GM10248 (cell line): ENCODE measurements at regions of chr5 and their contacts with region 1.

Region 1: DNA sequence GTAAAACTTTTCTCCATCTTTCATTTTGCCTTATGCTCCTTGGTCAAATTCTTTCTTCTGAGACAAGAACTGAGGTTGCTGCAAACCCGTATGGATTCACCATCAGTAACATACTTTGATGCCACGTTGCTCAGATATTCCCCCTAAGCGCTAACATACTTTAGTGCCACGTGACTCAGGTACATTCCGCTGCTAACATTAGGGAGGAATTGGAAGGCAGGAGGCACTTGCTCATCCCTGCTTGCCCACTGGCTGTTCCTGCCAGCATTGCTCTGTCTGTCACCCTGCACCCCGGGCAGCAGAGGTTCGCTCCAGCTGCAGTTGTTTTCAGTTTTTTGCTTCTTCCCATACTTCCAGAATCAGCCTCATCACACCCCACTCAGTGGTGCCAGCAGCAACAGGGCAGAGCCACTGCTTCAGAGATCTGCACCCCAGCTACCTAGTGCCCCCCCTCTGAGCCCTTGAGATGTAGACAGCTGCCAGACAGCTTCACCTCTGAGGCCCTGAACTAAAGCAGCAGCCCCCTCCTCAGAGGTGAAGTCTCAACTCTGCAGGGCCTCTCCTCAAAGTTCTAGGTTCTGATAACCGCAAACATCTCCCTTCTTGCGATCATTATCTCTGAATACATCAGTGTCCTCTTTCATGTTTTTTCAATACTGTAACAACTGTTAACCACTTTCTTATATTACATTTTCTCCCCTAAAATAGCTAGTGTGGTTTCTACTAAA is 228.0 kb upstream of the KIF2A start:
- DNase-seq: no peak
- CTCF ChIP-seq: no peak

Region 2: GRCh38 chr5:62065050-62065449 is 12.9 kb before region 1 on chr5:
- CTCF ChIA-PET with region 1: interaction called, 12 read pairs
- POLR2A ChIA-PET with region 1: no interaction called
- DNase-seq: no peak
- CTCF ChIP-seq: no peak